CD4-positive, alpha-beta T cell (primary cell): ENCODE measurements at regions of chr7 and their contacts with region 1.

Region 1: DNA sequence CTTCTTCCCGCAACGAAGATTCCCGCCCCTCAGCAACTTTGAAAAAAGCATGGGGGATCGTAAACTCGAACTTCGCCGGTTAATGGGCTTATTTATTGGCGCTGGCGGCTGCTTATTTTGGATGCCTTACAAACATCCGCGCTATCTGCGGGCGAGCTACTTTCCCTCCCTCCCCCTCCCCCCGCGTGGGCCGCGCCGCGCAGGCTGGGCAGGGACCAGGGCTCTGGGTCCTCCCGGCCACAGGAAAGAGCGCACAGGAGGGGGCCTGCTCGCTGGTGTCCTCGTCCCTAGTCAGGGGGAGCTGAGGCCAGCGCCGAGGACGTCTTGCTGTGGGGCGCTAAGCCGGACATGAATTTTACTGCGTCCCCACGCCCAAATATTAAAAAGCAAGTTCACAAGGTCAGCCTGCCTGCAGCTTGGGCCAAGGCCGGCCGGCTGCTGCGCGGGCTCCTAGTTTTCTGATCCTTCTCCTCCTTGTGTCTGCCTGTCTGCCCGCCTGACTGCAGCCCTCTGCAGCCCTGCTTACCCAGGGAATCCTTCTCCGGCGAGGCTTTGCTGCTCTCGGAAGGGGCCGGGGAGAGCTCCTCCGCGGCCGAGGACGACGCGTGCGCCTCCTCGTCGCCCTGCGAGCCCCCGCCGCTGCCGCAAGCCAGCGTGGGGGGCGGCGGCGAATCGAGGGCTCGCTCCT is 1.2 kb downstream of the HOXA10 start:
- DNase-seq: peak in 3 of 14 experiments; percentile 18 to 38 (median 25)
- ATAC-seq: peak; percentile 24
- H3K4me3 ChIP-seq: peak overlapping the region; percentile 34
- H3K4me3 Mint-ChIP-seq: no peak overlapping the region
- H3K27ac ChIP-seq: no peak overlapping the region
- H3K27ac Mint-ChIP-seq: no peak overlapping the region
- H3K4me1 ChIP-seq: peaks cover 59% of the 10 kb centered on the region
- H3K4me1 Mint-ChIP-seq: peaks cover 39% of the 10 kb centered on the region
- H3K27me3 ChIP-seq: peaks cover 78 to 96% of the 10 kb centered on the region in 2 experiments
- H3K27me3 Mint-ChIP-seq: peaks cover 84% of the 10 kb centered on the region
- CTCF ChIP-seq: no peak

Region 2: DNA sequence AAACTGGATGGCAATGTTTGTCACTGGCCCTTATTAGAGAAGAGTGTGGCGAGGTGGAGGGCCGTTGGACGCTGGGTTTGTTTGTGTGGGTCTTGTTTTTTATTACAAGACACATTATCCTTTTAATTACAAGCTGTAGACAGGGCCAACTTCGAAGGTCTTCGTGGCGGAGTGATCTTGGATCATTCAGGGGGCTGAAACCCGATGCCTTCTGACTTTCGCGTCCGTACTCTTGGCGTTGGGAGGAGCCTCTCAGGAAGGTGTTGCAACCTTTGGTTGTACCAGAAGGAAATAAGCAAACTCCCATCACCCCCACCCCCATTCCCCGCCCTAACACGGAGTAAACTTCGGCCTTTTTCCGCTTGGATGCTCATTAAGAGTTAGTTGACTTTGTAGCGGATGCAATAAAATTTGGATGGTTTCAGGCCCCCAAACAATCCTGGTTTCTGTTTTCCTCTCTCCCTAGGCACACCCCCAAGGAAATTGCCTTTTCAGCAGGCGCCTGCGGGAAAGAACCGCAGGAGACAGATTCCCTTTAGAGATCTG is 1315.5 kb before region 1 on chr7:
- CTCF ChIA-PET with region 1: no interaction called
- POLR2A ChIA-PET with region 1: no interaction called
- intact Hi-C with region 1: loop called in 1 of 2 experiments (anchors 2 kb)
- DNase-seq: no peak
- ATAC-seq: no peak
- H3K4me3 ChIP-seq: peak overlapping the region; percentile 25
- H3K4me3 Mint-ChIP-seq: no peak overlapping the region
- H3K27ac ChIP-seq: no peak overlapping the region
- H3K27ac Mint-ChIP-seq: no peak overlapping the region
- H3K4me1 ChIP-seq: peaks cover 43% of the 10 kb centered on the region
- H3K4me1 Mint-ChIP-seq: peaks cover 40% of the 10 kb centered on the region
- H3K27me3 ChIP-seq: peaks cover 95 to 100% of the 10 kb centered on the region in 2 experiments
- H3K27me3 Mint-ChIP-seq: no peaks in the 10 kb centered on the region
- CTCF ChIP-seq: no peak

Region 3: GRCh38 chr7:27150568-27151340 is 22.2 kb before region 1 on chr7:
- CTCF ChIA-PET with region 1: interaction called, 10 read pairs
- POLR2A ChIA-PET with region 1: no interaction called
- intact Hi-C with region 1: loop called in 1 of 2 experiments (anchors 2 kb)
- DNase-seq: peak in 13 of 14 experiments; percentile 31 to 86 (median 59)
- ATAC-seq: peak; percentile 85
- H3K4me3 ChIP-seq: peak overlapping the region; percentile 46
- H3K4me3 Mint-ChIP-seq: peak overlapping the region; percentile 79
- H3K27ac ChIP-seq: no peak overlapping the region
- H3K27ac Mint-ChIP-seq: no peak overlapping the region
- H3K4me1 ChIP-seq: peaks cover 61% of the 10 kb centered on the region
- H3K4me1 Mint-ChIP-seq: peaks cover 50% of the 10 kb centered on the region
- H3K27me3 ChIP-seq: peaks cover 91 to 98% of the 10 kb centered on the region in 2 experiments
- H3K27me3 Mint-ChIP-seq: peaks cover 98% of the 10 kb centered on the region
- CTCF ChIP-seq: peak; percentile 85

Region 4: DNA sequence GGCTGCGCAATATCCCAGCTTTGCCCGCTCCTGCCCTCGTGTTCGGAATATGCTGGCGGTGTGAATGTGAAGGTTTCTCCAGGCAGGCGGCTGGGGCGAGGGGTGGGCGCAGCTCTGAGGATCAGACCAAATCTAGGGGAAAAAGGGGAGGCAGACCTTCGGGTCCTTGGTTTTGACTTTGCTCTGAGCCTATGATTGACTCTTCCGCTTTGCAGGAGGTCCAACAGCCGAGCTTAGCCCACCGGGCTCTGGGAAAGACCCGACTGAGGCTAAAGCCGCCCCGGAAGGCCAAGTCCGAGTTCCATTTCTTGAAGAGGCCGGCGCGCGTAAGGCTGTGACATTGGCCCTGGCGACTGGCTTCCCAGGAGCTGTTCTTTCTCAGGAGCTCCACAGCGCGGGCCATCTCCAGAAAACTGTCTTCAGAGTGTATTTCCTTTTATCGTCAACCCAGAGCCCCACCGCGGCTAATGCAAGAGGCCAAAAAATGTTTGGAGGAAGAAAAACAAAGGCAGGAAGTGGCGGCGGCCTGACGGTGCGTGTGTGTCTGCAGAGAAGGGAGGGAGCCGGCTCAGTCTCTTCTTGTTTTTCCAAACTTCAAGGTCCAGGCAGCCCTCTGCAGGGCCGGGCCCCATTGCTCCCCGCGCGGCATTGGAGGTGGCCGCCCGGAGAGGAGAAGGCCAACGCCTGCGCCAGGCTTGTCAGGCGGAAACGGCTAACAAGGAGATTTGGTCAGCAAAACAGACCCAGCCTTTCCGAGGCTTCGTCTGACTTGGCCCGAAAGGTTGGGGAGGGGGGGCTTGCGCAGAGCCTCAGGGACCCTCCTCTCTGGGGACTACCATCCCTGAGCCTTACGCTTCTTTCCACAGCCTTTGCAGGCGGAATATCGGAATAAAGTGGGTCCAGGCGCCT is 15.7 kb after region 1 on chr7:
- CTCF ChIA-PET with region 1: interaction called, 3 read pairs
- POLR2A ChIA-PET with region 1: interaction called, 14 read pairs
- intact Hi-C with region 1: loop called (anchors 2 kb)
- DNase-seq: peak in 11 of 14 experiments; percentile 40 to 70 (median 58)
- ATAC-seq: peak; percentile 50
- H3K4me3 ChIP-seq: peak overlapping the region; percentile 38
- H3K4me3 Mint-ChIP-seq: peak overlapping the region; percentile 79
- H3K27ac ChIP-seq: no peak overlapping the region
- H3K27ac Mint-ChIP-seq: peak overlapping the region; percentile 80
- H3K4me1 ChIP-seq: peaks cover 80% of the 10 kb centered on the region
- H3K4me1 Mint-ChIP-seq: peaks cover 81% of the 10 kb centered on the region
- H3K27me3 ChIP-seq: peaks cover 94 to 96% of the 10 kb centered on the region in 2 experiments
- H3K27me3 Mint-ChIP-seq: peaks cover 99% of the 10 kb centered on the region
- CTCF ChIP-seq: no peak

Region 5: DNA sequence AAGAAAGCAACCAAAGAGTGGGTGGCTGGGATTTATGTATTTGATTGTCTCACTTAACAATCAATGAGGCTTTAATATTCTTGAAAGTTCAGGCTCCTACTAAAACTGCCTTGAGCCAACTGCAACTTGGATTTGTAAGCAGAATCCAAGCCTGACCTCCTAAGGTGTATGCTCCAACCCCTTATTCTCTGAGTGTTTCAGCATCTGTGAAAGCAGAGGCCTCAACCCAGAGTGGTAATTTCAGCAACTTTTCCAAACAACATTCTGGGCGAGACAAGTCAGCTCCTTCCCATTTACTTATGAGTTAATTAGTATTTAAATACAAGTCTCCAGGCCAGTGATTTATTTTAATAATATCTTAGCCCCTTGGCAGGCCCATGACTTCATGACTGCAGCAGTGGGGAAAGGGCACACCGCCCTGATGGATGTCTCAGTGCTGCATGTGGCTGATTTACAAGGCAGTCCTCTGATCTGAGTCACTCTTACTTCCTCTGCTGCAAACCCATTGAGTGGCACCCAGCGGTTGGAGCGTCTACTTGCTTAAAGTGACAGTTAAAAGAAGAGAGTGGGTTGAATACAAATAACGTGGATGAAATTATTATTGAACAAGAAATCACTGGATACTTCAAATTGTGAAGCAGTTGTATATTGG is 1576.1 kb after region 1 on chr7:
- CTCF ChIA-PET with region 1: no interaction called
- POLR2A ChIA-PET with region 1: no interaction called
- intact Hi-C with region 1: no loop called
- DNase-seq: peak in 3 of 14 experiments; percentile 3 to 30 (median 23)
- ATAC-seq: no peak
- H3K4me3 ChIP-seq: no peak overlapping the region
- H3K4me3 Mint-ChIP-seq: no peak overlapping the region
- H3K27ac ChIP-seq: no peak overlapping the region
- H3K27ac Mint-ChIP-seq: no peak overlapping the region
- H3K4me1 ChIP-seq: no peaks in the 10 kb centered on the region
- H3K4me1 Mint-ChIP-seq: no peaks in the 10 kb centered on the region
- H3K27me3 ChIP-seq: no peaks in the 10 kb centered on the region
- H3K27me3 Mint-ChIP-seq: no peaks in the 10 kb centered on the region
- CTCF ChIP-seq: no peak